ENCODE measurements at regions of chr2 and their contacts with region 1.

Region 1: GRCh38 chr2:65432227-65433190 is at the start of gene SPRED2:
- DNase-seq: peak; percentile 92
- H3K4me3 ChIP-seq: peak within 1 kb of the TSS; percentile 88 to 92
- H3K27ac ChIP-seq: peak within 1 kb of the TSS; percentile 92 to 96
- H3K4me1 ChIP-seq: peaks cover 4% of the 10 kb centered on the region
- H3K27me3 ChIP-seq: no peaks in the 10 kb centered on the region
- CTCF ChIP-seq: peak in 2 of 4 experiments; percentile 8 to 45
- POLR2A ChIP-seq: peak; percentile 60
- total RNA-seq, gene SPRED2: 23.7 to 27.1 TPM

Region 2: DNA sequence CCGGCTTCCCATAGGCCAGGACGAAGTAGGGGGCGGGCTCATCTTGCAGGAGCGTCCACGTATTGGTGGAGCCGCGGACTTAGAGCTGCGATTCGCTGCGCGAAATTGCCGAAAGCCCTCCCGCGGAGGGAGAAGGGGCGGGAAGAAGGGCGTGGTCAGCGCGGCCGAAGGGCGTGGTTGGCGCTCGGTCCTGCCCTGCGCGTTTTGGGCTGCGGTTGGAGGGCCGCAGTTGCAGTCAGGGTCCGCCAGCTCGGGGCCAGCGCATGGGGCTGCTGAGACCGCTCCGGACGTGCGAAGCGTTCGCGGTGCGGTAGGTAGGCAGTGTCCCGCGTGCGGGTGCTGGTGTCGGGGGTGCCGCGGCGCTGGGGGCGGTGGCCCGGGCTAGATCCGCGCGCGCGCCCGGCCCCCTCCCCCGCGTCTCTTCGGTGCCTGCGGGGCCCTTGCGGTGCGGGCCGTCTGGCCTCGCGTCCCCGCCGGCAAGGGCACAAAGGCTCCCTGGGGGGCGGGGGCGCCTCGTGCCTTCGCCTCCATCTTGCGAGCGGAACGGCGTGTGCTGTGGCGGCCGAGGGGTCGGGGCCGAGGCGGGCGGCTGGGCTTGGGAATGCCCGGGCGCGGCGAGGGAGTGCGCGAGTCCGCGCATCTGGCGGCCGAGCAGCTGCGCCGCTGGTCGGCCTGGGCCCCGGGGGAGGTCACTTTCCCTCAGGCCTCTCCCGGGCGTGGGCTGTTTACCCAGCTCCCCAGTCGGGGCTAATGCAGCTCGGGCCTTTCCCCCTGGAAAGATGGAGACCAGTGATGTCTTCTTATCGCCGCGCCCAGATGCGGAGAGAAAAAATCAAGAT is 376.1 kb before region 1 on chr2 and contains the start of gene CEP68:
- intact Hi-C with region 1: loop called (anchors 10 kb)
- DNase-seq: peak; percentile 97
- H3K4me3 ChIP-seq: peak within 1 kb of the TSS; percentile 79 to 90
- H3K27ac ChIP-seq: peak within 1 kb of the TSS; percentile 76 to 81
- H3K4me1 ChIP-seq: no peaks in the 10 kb centered on the region
- H3K27me3 ChIP-seq: no peaks in the 10 kb centered on the region
- CTCF ChIP-seq: peak in 2 of 4 experiments; percentile 20 to 34
- POLR2A ChIP-seq: peak; percentile 94
- total RNA-seq, gene CEP68: 15.3 to 28.8 TPM

Region 3: DNA sequence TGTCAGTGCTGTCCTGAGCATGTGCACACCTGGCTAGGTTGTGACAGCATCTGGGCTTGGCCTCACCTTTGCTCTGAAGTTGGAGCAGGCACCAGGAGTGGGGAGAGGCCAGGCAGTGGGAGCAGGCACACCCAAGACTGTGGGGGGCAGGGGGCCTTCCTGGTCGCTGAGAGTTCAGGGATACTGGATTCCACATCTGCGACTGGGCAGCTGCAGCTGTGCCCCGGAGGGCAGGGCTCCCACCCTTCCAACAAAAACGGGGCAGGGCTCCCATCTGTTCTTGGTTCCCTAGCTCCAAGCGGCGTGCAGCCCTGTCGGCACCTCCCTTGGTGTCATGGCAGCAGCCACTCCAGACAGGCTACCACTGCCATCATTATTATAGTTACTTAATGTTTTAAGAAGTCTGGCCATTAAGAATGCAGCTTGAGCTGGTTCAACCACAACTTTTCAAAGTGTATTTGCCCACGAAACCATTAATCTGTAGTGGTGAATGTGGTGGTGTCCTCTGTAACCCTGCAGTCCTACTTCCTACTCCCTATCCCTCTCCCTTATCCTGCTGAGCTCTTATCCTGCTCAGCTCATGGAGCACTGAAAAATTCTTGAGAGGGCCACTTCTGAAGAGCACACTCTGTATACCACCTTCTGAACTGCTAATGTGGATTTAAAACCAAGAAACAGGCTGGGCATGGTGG is 254.6 kb before region 1 on chr2:
- intact Hi-C with region 1: no loop called
- DNase-seq: no peak
- H3K4me3 ChIP-seq: no peak overlapping the region
- H3K27ac ChIP-seq: no peak overlapping the region
- H3K4me1 ChIP-seq: no peaks in the 10 kb centered on the region
- H3K27me3 ChIP-seq: no peaks in the 10 kb centered on the region
- CTCF ChIP-seq: no peak
- POLR2A ChIP-seq: no peak

Region 4: DNA sequence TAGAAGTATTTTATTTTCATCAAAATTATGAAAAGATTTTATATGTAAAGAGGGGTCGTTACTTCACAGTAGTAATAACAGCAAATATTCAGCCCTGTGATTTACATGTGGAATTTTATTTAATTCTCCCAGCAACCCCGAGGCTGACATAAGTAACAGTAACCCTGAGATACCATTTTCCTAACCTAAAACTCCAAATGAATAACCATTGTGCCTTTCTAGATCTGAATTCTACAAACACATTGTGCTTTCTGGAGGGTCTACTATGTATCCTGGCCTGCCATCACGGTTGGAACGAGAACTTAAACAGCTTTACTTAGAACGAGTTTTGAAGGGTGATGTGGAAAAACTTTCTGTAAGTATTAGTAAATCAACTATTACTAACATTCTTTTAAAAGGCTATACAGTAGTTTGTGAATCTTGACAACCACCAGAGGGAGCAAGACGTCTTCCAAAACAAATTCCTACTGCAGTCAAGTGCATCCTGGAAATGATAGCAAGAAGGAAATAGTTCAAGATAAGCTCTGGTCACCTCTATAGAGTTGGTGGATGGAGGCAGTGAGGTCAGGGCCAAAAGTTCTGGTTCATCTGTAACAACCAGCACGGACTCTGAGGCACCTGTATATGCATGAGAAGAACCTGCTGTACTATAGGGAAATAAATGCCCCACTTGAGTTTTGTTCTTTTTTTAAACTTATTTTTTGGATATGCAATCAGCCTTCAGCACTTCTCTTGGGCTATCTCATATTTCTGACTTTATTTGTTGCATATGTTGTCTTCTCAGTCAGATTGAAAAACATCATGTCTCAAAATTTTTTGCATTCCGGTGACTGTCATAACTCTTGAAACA is 167.5 kb before region 1 on chr2:
- intact Hi-C with region 1: loop called (anchors 2 kb)
- DNase-seq: peak; percentile 66
- H3K4me3 ChIP-seq: no peak overlapping the region
- H3K27ac ChIP-seq: no peak overlapping the region
- H3K4me1 ChIP-seq: no peaks in the 10 kb centered on the region
- H3K27me3 ChIP-seq: no peaks in the 10 kb centered on the region
- CTCF ChIP-seq: peak; percentile 44 to 85 (median 79)
- POLR2A ChIP-seq: no peak